Activated B cell treated with CpG ODN at 0.5 μM for 24 hours (primary cell): ENCODE measurements at regions of chr22 and their contacts with region 1.

Region 1: DNA sequence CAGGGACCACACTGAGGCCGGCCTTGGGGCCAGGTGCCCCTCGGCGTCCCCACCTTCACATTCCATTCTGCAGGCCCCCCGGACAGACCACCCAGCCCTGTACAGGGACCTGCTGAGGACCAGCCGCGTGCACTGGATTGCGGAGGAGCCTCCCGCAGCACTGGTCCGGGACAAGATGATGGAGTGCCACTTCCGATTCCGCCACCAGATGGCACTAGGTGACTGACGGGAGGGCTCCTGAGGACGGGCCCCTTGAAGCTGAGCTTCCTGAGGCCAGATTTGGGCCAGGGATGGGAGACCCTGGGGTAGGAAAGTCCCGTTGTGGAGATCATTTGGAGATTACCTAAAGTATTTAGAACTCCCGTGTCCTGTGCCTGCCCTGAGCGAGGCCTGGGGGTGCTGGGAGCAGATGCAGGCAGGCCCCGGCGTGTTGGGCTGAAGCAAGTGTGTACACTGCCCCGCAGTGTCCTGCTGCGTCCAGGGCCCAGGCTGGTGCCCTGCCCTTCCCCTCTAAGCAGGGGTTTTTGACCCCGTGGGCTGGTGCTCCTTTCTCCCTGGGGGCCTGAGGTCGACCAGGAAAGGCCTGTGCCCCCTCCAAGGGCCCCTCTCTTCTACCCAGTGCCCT is 20.0 kb downstream of the TRMU start:
- DNase-seq: peak; percentile 61
- ATAC-seq: peak; percentile 45
- H3K4me3 Mint-ChIP-seq: no peak overlapping the region
- H3K27ac Mint-ChIP-seq: no peak overlapping the region
- H3K4me1 Mint-ChIP-seq: peaks cover 11% of the 10 kb centered on the region
- H3K27me3 Mint-ChIP-seq: no peaks in the 10 kb centered on the region
- CTCF ChIP-seq: peak; percentile 29

Region 2: GRCh38 chr22:46340676-46341075 is 14.8 kb before region 1 on chr22:
- CTCF ChIA-PET with region 1: no interaction called
- POLR2A ChIA-PET with region 1: no interaction called
- intact Hi-C with region 1: no loop called
- DNase-seq: no peak
- ATAC-seq: no peak
- H3K4me3 Mint-ChIP-seq: no peak overlapping the region
- H3K27ac Mint-ChIP-seq: no peak overlapping the region
- H3K4me1 Mint-ChIP-seq: peaks cover 22% of the 10 kb centered on the region
- H3K27me3 Mint-ChIP-seq: no peaks in the 10 kb centered on the region
- CTCF ChIP-seq: no peak

Region 3: DNA sequence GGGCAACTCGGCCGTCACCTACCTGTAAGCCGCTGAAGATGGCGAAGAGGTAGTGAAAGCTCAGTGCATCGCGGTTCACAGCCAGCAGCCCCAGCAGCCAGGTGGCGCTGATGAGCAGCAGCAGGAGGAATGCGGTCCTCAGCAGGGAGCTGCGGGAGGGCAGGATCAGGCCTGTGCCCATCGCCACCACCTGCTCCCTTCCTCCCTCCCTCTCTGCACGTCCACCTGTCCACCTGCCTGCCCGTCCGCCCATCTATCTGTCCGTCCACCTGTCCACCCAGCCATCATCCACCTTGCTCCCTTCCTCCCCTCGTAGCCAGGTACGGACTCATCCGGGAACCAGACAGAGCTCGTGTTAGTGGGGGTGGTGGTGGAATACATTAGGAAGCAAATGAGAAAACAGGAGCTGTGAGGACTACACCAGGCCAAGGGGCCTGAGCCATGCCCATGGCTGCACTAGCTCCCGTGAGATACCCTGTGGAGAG is 12.3 kb after region 1 on chr22:
- CTCF ChIA-PET with region 1: interaction called, 14 read pairs
- POLR2A ChIA-PET with region 1: interaction called, 3 read pairs
- intact Hi-C with region 1: loop called (anchors 2 kb)
- DNase-seq: peak; percentile 72
- ATAC-seq: peak; percentile 65
- H3K4me3 Mint-ChIP-seq: no peak overlapping the region
- H3K27ac Mint-ChIP-seq: no peak overlapping the region
- H3K4me1 Mint-ChIP-seq: peaks cover 12% of the 10 kb centered on the region
- H3K27me3 Mint-ChIP-seq: no peaks in the 10 kb centered on the region
- CTCF ChIP-seq: peak; percentile 58